ENCODE measurements at regions of chr12 and their contacts with region 1.

Region 1: DNA sequence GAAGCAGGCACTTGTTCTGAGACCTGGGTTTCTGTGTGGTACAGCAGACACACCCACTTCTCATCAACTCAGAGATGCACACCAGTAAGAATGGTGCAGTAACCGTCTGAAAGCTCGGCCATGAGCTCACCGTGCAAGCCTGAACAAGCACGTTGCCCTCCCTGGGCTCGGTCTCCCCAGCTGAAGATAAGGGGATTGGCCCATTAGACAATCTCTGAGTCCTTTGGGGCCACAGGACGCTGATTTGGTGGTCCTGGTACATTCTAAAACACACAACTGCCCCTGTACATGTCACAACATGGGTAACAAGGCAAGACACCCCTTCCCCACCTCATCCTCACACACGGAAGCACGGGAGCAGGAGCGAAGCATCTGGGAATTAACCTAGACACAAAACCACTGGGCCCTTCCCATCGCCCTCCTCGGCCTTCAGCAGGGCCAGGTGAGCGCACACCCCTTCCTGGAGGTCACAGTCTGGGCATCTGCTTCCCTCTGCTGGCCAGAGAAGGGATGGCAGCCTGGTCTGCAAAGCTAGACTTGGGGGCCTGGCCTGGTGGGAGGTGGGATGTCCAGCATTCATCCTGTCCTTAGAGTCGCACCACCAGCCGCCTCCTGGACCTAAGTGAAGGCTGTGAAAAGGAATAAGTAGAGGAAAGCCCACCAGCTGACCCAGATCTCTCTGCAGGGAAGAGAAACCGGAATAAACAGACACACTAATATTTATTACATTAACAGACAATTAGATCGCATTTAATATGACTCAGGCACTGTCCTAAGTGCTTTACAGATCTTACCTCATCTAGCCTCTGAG is 18.9 kb upstream of the SMUG1 start:
- ATAC-seq: peak; percentile 91 to 99 (median 94)
- H3K4me3 ChIP-seq: no peak overlapping the region
- H3K27ac ChIP-seq: no peak overlapping the region
- H3K4me1 ChIP-seq: peaks cover 0 to 14% of the 10 kb centered on the region in 2 donors

Region 2: DNA sequence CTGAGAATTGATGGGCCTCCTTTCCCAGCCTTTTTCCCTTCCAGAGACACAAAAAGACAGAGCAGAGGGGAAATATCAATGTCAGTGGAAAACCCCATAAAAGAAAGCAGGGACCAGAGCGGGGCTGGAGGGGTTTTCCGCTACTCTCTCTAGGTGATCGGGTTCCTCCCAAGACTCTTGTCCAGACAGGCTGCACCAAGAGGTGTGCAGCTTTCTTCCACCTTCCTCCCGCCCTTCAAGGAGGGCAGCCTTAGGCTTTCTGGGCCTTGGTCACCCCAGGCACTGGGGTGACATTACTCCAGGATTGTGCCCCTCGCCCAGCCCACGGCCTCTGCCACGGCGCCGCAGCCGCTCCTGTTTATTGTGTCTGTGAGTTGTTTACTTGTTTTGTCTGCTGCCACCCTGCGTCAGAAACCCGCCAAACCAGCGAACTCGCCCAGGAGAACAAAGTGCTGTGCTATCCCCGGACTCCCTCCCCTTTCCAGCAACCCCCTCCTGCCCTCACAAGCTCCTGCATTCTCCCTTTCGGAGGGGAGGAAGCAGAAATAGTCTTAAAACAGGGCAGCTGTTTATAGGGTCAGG is 186.2 kb before region 1 on chr12:
- in situ Hi-C with region 1: loop called in 2 of 9 experiments (anchors 10 kb)
- ATAC-seq: peak in 1 of 8 experiments; percentile 5
- H3K4me3 ChIP-seq: no peak overlapping the region
- H3K27ac ChIP-seq: peak overlapping the region in 1 of 2 donors; percentile 9
- H3K4me1 ChIP-seq: peaks cover 15 to 83% of the 10 kb centered on the region in 2 donors